Activated naive CD4-positive, alpha-beta T cell treated with anti-CD3 and anti-CD28 coated beads, Interleukin-2, amount 10 ng/mL, durations not matched to agents 7 days and 5 days (primary cell): ENCODE measurements at regions of chr10 and their contacts with region 1.

Region 1: GRCh38 chr10:17228091-17228940 is at the start of gene VIM:
- DNase-seq: peak; percentile 90
- H3K4me3 Mint-ChIP-seq: peak within 1 kb of the TSS; percentile 91
- H3K27ac Mint-ChIP-seq: peak within 1 kb of the TSS; percentile 99
- H3K4me1 Mint-ChIP-seq: peaks cover 49% of the 10 kb centered on the region
- H3K27me3 Mint-ChIP-seq: peaks cover 13% of the 10 kb centered on the region

Region 2: GRCh38 chr10:17200912-17201793 is 27.2 kb before region 1 on chr10 and contains the start of gene TRDMT1:
- CTCF ChIA-PET with region 1: interaction called, 24 read pairs
- DNase-seq: peak; percentile 84
- H3K4me3 Mint-ChIP-seq: peak within 1 kb of the TSS; percentile 93
- H3K27ac Mint-ChIP-seq: peak within 1 kb of the TSS; percentile 90
- H3K4me1 Mint-ChIP-seq: peaks cover 49% of the 10 kb centered on the region
- H3K27me3 Mint-ChIP-seq: no peaks in the 10 kb centered on the region

Region 3: DNA sequence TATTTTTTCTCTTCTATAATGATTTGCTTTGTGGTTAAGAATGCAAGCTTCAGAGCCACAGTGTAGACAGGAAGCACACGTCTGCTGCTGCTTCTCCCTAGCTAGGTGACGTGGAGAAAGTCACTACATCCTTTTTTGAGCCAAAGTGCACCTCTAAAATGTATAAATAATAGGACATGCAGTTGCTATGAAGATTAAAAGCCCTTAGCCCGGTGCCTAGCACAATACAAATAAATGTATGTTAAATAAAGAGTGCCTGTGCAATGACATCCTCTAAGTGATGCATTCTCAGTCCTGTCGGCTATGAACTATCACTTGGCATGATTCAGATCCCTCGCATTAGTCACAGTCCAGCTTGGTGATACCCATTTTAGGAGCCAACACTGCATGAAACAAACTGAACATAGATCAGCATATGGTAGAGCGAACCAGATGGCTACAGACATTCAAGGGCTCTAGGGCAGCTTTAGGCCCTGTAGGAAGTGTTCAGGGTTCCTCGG is 22.1 kb before region 1 on chr10:
- CTCF ChIA-PET with region 1: interaction called, 24 read pairs
- DNase-seq: peak; percentile 54
- H3K4me3 Mint-ChIP-seq: peak overlapping the region; percentile 35
- H3K27ac Mint-ChIP-seq: peak overlapping the region; percentile 88
- H3K4me1 Mint-ChIP-seq: peaks cover 52% of the 10 kb centered on the region
- H3K27me3 Mint-ChIP-seq: no peaks in the 10 kb centered on the region

Region 4: DNA sequence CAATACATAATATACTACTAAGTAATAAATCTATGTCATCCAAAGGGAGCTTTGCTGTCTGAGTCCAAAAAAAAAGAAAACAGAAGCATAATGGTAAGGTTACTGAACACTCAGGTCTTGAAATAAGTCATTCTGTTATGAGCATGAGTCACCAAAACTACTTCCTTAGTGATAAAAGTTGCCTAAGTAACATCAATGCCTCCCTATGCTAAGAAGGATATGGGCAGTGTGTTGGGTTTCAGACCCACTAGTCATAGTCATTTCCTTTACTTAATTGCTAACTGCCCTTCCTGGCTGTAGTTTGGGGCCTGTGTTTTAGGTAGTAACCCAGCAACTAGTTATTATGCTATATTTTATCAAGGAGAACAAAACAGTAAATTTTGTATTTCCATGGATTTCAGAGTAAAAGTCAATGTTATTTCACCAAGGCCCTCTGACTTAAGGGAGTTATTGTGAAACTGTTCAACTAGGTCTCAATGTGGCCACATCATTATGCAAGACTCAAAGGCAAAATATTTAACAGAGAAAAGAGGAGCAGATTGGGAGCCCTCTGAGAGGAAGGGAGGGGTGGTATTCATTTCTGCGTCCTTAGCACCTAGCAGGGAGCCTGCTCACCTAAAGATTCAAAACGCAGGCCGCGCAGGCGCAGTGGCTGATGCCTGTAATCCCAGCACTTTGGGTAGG is 12.0 kb before region 1 on chr10:
- CTCF ChIA-PET with region 1: interaction called, 10 read pairs
- DNase-seq: peak; percentile 48
- H3K4me3 Mint-ChIP-seq: no peak overlapping the region
- H3K27ac Mint-ChIP-seq: peak overlapping the region; percentile 86
- H3K4me1 Mint-ChIP-seq: peaks cover 46% of the 10 kb centered on the region
- H3K27me3 Mint-ChIP-seq: peaks cover 5% of the 10 kb centered on the region

Region 5: GRCh38 chr10:17335065-17335464 is 106.7 kb after region 1 on chr10:
- CTCF ChIA-PET with region 1: no interaction called
- DNase-seq: no peak
- H3K4me3 Mint-ChIP-seq: no peak overlapping the region
- H3K27ac Mint-ChIP-seq: no peak overlapping the region
- H3K4me1 Mint-ChIP-seq: no peaks in the 10 kb centered on the region
- H3K27me3 Mint-ChIP-seq: peaks cover 1% of the 10 kb centered on the region